A673 (cell line): ENCODE measurements at regions of chr5 and their contacts with region 1.

Region 1: GRCh38 chr5:141811287-141812155 is 66.7 kb downstream of the PCDH1 start:
- DNase-seq: peak; percentile 39
- H3K4me3 ChIP-seq: no peak overlapping the region
- H3K27ac ChIP-seq: no peak overlapping the region
- H3K4me1 ChIP-seq: peaks cover 6% of the 10 kb centered on the region
- H3K27me3 ChIP-seq: no peaks in the 10 kb centered on the region
- CTCF ChIP-seq: peak; percentile 82

Region 2: DNA sequence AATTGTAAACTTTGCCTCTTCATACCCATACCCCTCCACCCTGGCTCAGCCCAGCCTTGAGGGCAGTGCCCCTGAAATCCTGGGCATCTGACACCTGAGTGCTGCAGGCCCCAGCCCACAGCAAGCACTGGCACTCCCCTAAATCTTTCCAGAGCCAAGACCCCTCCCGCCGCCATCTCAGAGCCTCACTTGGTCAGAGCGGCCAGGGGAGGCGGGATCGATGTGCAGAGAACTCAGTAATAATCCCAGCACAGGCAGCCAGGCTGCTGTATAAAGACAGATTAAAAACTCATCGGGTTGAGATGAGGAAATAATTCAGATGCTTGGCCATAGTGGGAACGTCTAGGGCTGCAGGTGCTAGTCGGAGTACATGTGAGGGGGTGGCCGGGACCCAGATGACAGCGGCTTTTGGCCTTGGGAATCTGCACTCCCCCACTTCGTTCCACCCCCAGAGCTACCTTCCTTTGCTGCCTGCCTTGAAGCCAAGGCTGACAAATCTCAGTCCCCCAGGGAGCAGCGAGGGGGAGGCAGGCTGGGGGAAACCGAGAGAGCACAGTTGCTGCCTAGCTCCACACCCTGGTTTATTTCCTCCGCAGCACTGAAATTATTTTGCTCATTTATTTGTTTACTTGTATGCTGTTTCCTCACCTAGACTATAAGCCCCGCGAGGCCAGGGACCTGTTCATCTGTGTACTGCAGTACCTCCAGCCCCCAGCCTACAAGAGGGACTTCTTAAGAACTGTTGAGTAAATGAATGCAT is 110.0 kb before region 1 on chr5:
- CTCF ChIA-PET with region 1: no interaction called
- POLR2A ChIA-PET with region 1: no interaction called
- intact Hi-C with region 1: loop called (anchors 5 kb)
- DNase-seq: no peak
- H3K4me3 ChIP-seq: peak overlapping the region; percentile 45
- H3K27ac ChIP-seq: no peak overlapping the region
- H3K4me1 ChIP-seq: peaks cover 12% of the 10 kb centered on the region
- H3K27me3 ChIP-seq: peaks cover 6% of the 10 kb centered on the region
- CTCF ChIP-seq: no peak